ENCODE measurements at regions of chr17 and their contacts with region 1.

Region 1: GRCh38 chr17:17836250-17836817 is 452 bp downstream of the SREBF1 start:
- DNase-seq: peak; percentile 99
- H3K4me3 Mint-ChIP-seq: peak overlapping the region; percentile 89
- H3K27ac Mint-ChIP-seq: peak overlapping the region; percentile 96
- H3K4me1 Mint-ChIP-seq: peaks cover 68% of the 10 kb centered on the region
- H3K27me3 Mint-ChIP-seq: no peaks in the 10 kb centered on the region

Region 2: DNA sequence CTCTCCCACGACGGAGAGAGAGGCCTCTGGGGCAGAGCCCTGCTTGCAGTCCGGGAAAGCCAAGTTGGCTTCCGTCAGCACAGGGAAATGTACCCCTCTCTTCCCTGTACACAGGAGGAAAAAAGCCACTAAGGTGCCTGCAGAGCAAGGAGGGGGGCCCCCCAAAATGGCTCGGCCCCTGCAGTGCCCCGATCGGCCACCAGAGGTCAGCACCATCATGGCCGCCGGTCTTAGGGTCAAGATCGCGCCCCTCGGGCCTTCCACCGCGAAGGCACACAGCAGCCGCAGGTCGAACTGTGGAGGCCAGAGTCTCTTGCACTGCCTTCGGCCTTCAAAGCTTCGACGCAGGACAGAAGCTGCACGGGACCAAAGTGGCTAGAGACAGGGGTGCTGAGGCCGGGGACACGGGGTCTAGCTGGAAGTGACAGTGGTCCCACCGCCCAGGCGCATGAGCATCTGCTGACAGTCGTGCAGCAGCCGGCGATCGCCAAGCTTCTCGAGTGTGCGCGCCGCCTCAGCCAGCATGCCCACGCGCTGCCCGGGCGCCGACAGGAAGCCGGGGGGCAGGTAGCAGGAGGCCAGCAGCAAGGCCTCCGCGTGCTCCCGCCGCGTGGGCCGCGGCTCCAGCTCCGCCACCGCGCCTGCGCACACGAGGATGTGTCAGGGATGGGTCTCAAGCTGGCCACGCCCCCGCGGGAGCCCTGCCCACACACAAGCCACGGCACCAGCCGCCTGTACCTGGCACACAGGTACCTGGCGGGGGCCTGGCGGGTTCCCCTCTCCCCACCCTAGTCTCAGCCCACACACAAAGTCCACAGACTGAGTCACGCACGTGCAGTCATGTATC is 23.9 kb before region 1 on chr17:
- CTCF ChIA-PET with region 1: interaction called, 12 read pairs
- POLR2A ChIA-PET with region 1: interaction called, 10 read pairs
- intact Hi-C with region 1: no loop called
- DNase-seq: peak; percentile 73
- H3K4me3 Mint-ChIP-seq: no peak overlapping the region
- H3K27ac Mint-ChIP-seq: peak overlapping the region; percentile 38
- H3K4me1 Mint-ChIP-seq: peaks cover 4% of the 10 kb centered on the region
- H3K27me3 Mint-ChIP-seq: no peaks in the 10 kb centered on the region

Region 3: GRCh38 chr17:17849845-17850373 is 13.6 kb after region 1 on chr17:
- CTCF ChIA-PET with region 1: interaction called, 12 read pairs
- POLR2A ChIA-PET with region 1: interaction called, 110 read pairs
- intact Hi-C with region 1: loop called (anchors 1 kb)
- DNase-seq: peak; percentile 93
- H3K4me3 Mint-ChIP-seq: no peak overlapping the region
- H3K27ac Mint-ChIP-seq: peak overlapping the region; percentile 97
- H3K4me1 Mint-ChIP-seq: peaks cover 70% of the 10 kb centered on the region
- H3K27me3 Mint-ChIP-seq: no peaks in the 10 kb centered on the region

Region 4: GRCh38 chr17:17877529-17878358 is 41.4 kb after region 1 on chr17:
- CTCF ChIA-PET with region 1: no interaction called
- POLR2A ChIA-PET with region 1: no interaction called
- intact Hi-C with region 1: no loop called
- DNase-seq: no peak
- H3K4me3 Mint-ChIP-seq: no peak overlapping the region
- H3K27ac Mint-ChIP-seq: no peak overlapping the region
- H3K4me1 Mint-ChIP-seq: no peaks in the 10 kb centered on the region
- H3K27me3 Mint-ChIP-seq: no peaks in the 10 kb centered on the region